ENCODE measurements at regions of chr13 and their contacts with region 1.

Region 1: GRCh38 chr13:69579351-69579750 is 528.3 kb upstream of the ATXN8OS start:
- DNase-seq: no peak
- H3K4me3 ChIP-seq: no peak overlapping the region
- H3K27ac ChIP-seq: no peak overlapping the region
- H3K4me1 ChIP-seq: no peaks in the 10 kb centered on the region
- CTCF ChIP-seq: 0 out of 2 replicates have a peak, but pooled peaks have one; percentile 21

Region 2: GRCh38 chr13:69477451-69477850 is 101.9 kb before region 1 on chr13:
- CTCF ChIA-PET with region 1: no interaction called
- POLR2A ChIA-PET with region 1: no interaction called
- intact Hi-C with region 1: no loop called
- DNase-seq: no peak
- H3K4me3 ChIP-seq: no peak overlapping the region
- H3K27ac ChIP-seq: no peak overlapping the region
- H3K4me1 ChIP-seq: no peaks in the 10 kb centered on the region
- CTCF ChIP-seq: no peak

Region 3: GRCh38 chr13:69524459-69525155 is 54.7 kb before region 1 on chr13:
- CTCF ChIA-PET with region 1: no interaction called
- POLR2A ChIA-PET with region 1: no interaction called
- intact Hi-C with region 1: loop called (anchors 10 kb)
- DNase-seq: no peak
- H3K4me3 ChIP-seq: no peak overlapping the region
- H3K27ac ChIP-seq: no peak overlapping the region
- H3K4me1 ChIP-seq: no peaks in the 10 kb centered on the region
- CTCF ChIP-seq: peak; percentile 68

Measured in OCI-LY7 (cell line).